HEK293 (cell line): ENCODE measurements at regions of chr21 and their contacts with region 1.

Region 1: GRCh38 chr21:43975495-43975993 is 36.6 kb upstream of the TRAPPC10 start:
- H3K4me3 ChIP-seq: no peak overlapping the region
- H3K27ac ChIP-seq: no peak overlapping the region
- H3K4me1 ChIP-seq: no peaks in the 10 kb centered on the region
- CTCF ChIP-seq: peak; percentile 97

Region 2: GRCh38 chr21:43754948-43755781 is 220.4 kb before region 1 on chr21:
- CTCF ChIA-PET with region 1: no interaction called
- POLR2A ChIA-PET with region 1: no interaction called
- H3K4me3 ChIP-seq: no peak overlapping the region
- H3K27ac ChIP-seq: no peak overlapping the region
- H3K4me1 ChIP-seq: no peaks in the 10 kb centered on the region
- CTCF ChIP-seq: no peak

Region 3: DNA sequence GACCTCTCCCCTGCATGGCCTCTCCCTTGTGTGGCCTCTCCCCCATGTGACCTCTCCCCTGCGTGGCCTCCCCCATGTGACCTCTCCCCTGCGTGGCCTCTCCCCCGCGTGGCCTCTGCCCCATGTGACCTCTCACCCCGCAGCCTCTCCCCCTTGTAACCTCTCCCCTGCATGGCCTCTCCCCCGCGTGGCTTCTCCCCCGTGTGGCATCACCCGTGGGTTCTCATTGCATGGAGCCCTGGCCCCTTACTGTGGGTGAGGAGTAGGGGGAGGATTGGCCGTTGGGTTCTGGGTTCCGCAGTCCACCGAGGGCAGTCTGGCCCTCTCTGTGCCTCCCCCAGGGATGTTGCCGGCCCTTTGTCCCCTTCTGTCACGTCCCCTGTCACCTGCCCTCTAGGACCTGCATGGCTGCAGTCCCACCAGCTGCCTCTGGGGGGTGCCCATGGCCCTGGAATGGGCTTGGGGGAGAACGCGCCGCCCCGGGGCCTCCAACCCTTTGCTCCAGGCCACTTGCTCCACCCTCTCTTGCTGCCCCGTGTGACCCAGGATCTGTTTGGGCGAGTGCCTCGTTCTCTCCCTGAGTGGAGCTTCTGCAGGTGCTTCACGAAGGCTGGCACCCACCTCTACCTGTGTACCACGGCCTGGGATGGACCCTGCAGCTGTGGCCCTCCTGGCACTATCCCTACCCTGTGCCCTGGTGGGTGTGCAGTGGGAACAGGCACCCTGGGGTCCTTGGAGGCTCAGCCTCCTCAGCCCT is 164.9 kb before region 1 on chr21:
- CTCF ChIA-PET with region 1: interaction called, 39 read pairs
- POLR2A ChIA-PET with region 1: interaction called, 3 read pairs
- H3K4me3 ChIP-seq: no peak overlapping the region
- H3K27ac ChIP-seq: no peak overlapping the region
- H3K4me1 ChIP-seq: no peaks in the 10 kb centered on the region
- CTCF ChIP-seq: peak; percentile 98